ENCODE measurements at regions of chr12 and their contacts with region 1.

Region 1: GRCh38 chr12:54958048-54958658 is 26.4 kb downstream of the TESPA1 start:
- DNase-seq: peak; percentile 72
- ATAC-seq: peak; percentile 82
- H3K4me3 ChIP-seq: no peak overlapping the region
- H3K27ac ChIP-seq: no peak overlapping the region
- H3K4me1 ChIP-seq: no peaks in the 10 kb centered on the region
- H3K27me3 ChIP-seq: peaks cover 2% of the 10 kb centered on the region; the same call in 1 of the 2 replicates
- CTCF ChIP-seq: peak; percentile 80
- POLR2A ChIP-seq: no peak
- RAD21 ChIP-seq: peak; percentile 90

Region 2: DNA sequence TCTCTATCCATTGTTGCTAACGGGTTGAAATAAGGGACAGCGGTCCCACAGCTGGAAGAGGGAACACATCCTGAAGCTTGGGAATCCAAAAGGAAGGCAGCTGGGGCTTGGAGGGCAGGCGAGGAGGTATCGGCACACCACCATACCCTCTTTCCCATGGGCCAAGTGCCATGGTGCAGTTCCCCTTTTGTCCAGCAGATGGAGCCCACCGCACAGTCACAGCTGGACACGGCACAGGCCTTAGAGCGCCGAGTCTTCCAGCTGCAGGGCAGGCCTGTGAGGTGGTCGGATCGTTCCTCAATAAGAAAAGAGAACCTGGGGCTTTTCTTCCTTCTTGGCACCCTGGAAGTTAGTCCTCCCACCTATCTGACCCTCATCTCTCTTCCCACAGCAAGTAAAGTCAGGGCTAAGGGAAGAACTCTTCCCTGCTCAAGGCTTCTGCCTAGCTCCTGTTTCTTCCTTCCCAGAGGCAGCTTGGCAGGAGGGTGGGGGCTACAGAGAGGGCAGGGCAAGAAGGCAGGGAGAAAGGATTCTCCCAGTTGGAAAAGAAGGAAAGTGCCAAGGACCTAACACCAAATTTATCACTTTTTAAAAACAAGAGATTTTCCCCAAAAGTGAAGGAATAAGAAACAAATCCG is 378.3 kb before region 1 on chr12:
- CTCF ChIA-PET with region 1: no interaction called
- POLR2A ChIA-PET with region 1: no interaction called
- dilution Hi-C with region 1: no loop called
- in situ Hi-C with region 1: no loop called
- intact Hi-C with region 1: loop called (anchors 1 kb)
- DNase-seq: peak; percentile 57
- ATAC-seq: peak; percentile 100
- H3K4me3 ChIP-seq: no peak overlapping the region
- H3K27ac ChIP-seq: no peak overlapping the region
- H3K4me1 ChIP-seq: no peaks in the 10 kb centered on the region
- H3K27me3 ChIP-seq: peaks cover 21% of the 10 kb centered on the region
- CTCF ChIP-seq: peak; percentile 87
- POLR2A ChIP-seq: no peak
- RAD21 ChIP-seq: peak; percentile 53

Region 3: DNA sequence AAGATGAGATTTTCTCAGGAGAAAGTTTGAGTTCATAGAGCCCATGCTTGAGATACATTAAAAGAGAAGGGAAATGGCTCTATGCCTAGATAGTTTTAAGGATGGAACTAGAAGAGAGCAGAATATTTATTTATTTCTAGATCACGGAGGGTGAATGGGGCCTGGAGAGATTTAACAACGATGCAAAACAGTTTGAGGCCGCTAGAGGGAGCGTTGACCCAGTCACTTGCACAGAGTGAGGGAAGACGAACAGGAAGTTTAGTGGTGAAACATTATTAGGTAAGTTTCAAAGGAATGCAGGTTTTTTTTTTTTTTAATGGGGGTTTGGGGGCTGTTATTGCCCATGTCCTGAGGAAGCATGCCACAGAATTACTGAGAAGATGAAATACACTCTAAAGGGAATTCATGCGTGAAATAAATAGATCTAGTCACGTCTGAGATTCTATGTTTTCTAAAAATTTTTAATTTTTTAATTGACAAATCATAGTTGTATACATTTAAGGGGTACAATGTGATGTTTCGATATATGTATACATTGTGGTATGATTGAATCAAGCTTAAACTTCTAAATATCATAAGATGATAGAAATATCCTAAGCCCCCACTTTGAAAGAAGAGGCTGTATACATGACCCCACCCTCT is 354.9 kb before region 1 on chr12:
- CTCF ChIA-PET with region 1: no interaction called
- POLR2A ChIA-PET with region 1: no interaction called
- dilution Hi-C with region 1: no loop called
- in situ Hi-C with region 1: no loop called
- intact Hi-C with region 1: loop called (anchors 5 kb)
- DNase-seq: peak; percentile 65
- ATAC-seq: peak; percentile 94
- H3K4me3 ChIP-seq: no peak overlapping the region
- H3K27ac ChIP-seq: no peak overlapping the region
- H3K4me1 ChIP-seq: no peaks in the 10 kb centered on the region
- H3K27me3 ChIP-seq: peaks cover 3% of the 10 kb centered on the region; the same call in 1 of the 2 replicates
- CTCF ChIP-seq: peak; percentile 72
- POLR2A ChIP-seq: no peak
- RAD21 ChIP-seq: peak; percentile 22

Region 4: GRCh38 chr12:54701940-54702592 is 256.1 kb before region 1 on chr12:
- CTCF ChIA-PET with region 1: interaction called, 9 read pairs
- POLR2A ChIA-PET with region 1: no interaction called
- dilution Hi-C with region 1: no loop called
- in situ Hi-C with region 1: no loop called
- intact Hi-C with region 1: loop called (anchors 1 kb)
- DNase-seq: peak; percentile 41
- ATAC-seq: peak; percentile 73; the same call in 1 of the 2 replicates
- H3K4me3 ChIP-seq: no peak overlapping the region
- H3K27ac ChIP-seq: no peak overlapping the region
- H3K4me1 ChIP-seq: no peaks in the 10 kb centered on the region
- H3K27me3 ChIP-seq: no peaks in the 10 kb centered on the region
- CTCF ChIP-seq: peak; percentile 61
- POLR2A ChIP-seq: no peak
- RAD21 ChIP-seq: peak; percentile 35

Region 5: DNA sequence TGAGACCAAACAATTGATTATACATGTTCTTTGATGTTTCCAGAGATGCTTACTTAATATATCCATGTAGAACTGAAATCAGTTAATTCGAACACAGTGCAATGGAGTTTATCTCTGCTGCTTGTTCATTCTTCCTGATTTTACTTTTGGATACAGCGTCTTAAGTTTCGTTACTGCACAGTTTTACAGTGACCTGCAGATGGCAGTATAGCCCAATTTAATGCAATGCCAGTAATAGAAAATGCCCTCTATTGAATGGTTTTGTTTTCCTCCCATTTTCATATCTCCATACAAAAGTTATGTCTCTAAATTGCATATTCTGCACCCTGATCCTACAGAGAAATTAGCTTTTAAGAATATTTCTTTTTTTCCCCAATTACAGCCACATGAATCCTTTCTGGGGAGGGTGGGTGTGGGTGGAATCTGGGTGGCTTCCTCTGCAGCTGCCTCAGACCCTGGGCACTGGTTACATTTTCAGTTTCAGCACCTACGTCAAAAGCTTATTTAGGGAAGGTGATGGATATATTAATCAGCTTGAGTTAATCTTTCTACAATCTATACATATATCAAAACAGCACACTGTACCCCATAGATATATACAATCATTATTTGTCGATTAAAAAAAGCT is 208.8 kb before region 1 on chr12:
- CTCF ChIA-PET with region 1: interaction called, 20 read pairs
- POLR2A ChIA-PET with region 1: no interaction called
- dilution Hi-C with region 1: no loop called
- in situ Hi-C with region 1: loop called (anchors 5 kb)
- intact Hi-C with region 1: loop called (anchors 1 kb)
- DNase-seq: peak; percentile 47
- ATAC-seq: peak; percentile 80
- H3K4me3 ChIP-seq: no peak overlapping the region
- H3K27ac ChIP-seq: no peak overlapping the region
- H3K4me1 ChIP-seq: no peaks in the 10 kb centered on the region
- H3K27me3 ChIP-seq: no peaks in the 10 kb centered on the region
- CTCF ChIP-seq: peak; percentile 78
- POLR2A ChIP-seq: no peak
- RAD21 ChIP-seq: peak; percentile 70

Region 6: DNA sequence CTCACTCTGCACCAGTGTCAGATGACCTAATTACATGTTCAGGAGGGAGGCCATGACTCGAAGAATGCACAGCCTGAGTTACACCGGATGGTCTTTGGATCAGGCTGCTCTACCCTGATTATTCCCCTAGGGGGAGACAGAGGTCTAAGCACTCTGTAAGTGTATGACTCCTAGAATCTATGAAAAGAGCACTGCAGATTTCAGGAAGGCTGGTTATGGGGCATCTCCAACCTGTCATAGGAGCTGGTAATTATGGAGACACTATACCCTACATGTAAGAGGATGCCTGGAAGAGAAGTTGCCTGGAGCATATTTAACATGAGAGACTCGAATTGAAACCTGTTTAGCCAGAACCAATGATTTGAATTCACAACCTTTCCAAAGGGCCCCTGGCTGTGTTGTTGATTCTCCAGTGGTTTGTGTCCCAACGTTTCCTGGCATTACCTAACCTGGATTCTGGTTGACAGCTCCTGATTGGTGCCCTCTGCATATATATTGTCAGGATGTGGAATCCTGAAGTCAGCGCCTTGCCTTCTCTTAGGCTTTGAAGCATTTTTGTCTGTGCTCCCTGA is 104.1 kb before region 1 on chr12 and contains the start of gene MUCL1:
- CTCF ChIA-PET with region 1: interaction called, 8 read pairs
- POLR2A ChIA-PET with region 1: no interaction called
- dilution Hi-C with region 1: no loop called
- in situ Hi-C with region 1: loop called (anchors 5 kb)
- intact Hi-C with region 1: loop called (anchors 1 kb)
- DNase-seq: peak; percentile 57
- ATAC-seq: peak; percentile 96
- H3K4me3 ChIP-seq: no peak within 1 kb of the TSS
- H3K27ac ChIP-seq: no peak within 1 kb of the TSS
- H3K4me1 ChIP-seq: no peaks in the 10 kb centered on the region
- H3K27me3 ChIP-seq: no peaks in the 10 kb centered on the region
- CTCF ChIP-seq: peak; percentile 80
- POLR2A ChIP-seq: no peak
- RAD21 ChIP-seq: peak; percentile 78
- total RNA-seq, gene MUCL1: not detected in 2 replicates

Measured in IMR-90 (cell line).